Activated CD8-positive, alpha-beta T cell treated with anti-CD3 and anti-CD28 coated beads for 36 hours (primary cell): ENCODE measurements at regions of chr4 and their contacts with region 1.

Region 1: GRCh38 chr4:184503869-184504300 is 29.5 kb upstream of the IRF2 start:
- DNase-seq: peak; percentile 33
- ATAC-seq: peak; percentile 70
- H3K4me3 Mint-ChIP-seq: peak overlapping the region; percentile 29
- H3K27ac Mint-ChIP-seq: peak overlapping the region; percentile 64
- H3K4me1 Mint-ChIP-seq: peaks cover 16% of the 10 kb centered on the region
- H3K27me3 Mint-ChIP-seq: no peaks in the 10 kb centered on the region
- CTCF ChIP-seq: no peak

Region 2: DNA sequence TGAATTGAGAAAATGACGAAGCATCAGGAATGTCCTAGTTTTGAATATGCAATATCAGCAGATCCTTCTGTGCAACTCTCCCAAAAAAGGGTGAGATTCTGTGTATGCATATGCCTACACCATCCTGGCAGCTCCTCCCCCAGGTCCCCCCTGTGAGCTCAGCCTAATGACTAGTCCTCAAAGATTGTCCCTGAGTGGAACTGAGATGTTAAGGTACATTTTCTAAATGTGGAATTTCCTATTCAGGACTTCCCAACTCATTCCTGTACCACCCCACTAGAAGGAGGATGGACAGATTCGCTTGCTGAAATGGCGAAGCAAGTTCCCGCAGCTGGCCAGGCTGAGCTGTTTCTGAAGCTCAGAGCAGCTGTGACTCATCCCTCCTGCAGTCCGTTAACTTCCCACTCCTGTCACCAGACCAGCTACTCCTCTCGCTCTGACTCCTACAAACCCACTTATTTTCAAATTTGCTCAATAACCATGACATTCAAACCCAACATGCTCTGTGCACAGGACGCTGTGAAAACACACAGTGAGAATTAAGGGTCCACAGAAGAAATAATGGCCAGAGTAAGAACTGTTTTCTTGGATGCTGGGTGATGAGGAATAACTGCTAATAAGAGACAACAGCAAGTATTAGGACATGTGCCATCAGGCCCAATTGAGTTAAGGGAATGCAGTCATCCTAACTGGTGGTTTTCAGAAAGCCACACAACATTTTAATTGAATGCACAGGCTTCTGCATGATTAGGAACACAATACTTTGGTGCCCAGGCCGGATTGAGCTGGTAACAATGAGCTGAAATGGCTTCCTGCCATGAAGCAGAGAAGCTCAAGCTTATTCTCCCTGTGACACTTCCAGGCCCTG is 10.5 kb after region 1 on chr4:
- CTCF ChIA-PET with region 1: interaction called, 17 read pairs
- POLR2A ChIA-PET with region 1: interaction called, 14 read pairs
- intact Hi-C with region 1: no loop called
- DNase-seq: peak; percentile 88
- ATAC-seq: peak; percentile 93
- H3K4me3 Mint-ChIP-seq: peak overlapping the region; percentile 61
- H3K27ac Mint-ChIP-seq: peak overlapping the region; percentile 81
- H3K4me1 Mint-ChIP-seq: peaks cover 37% of the 10 kb centered on the region
- H3K27me3 Mint-ChIP-seq: no peaks in the 10 kb centered on the region
- CTCF ChIP-seq: no peak